CD4-positive, alpha-beta T cell (primary cell): ENCODE measurements at regions of chr2 and their contacts with region 1.

Region 1: GRCh38 chr2:234425619-234426603 is 71.0 kb downstream of the ARL4C start:
- DNase-seq: peak; percentile 70 to 95 (median 82)
- ATAC-seq: peak; percentile 70
- H3K4me3 ChIP-seq: peak overlapping the region; percentile 5
- H3K4me3 Mint-ChIP-seq: peak overlapping the region; percentile 88
- H3K27ac ChIP-seq: peak overlapping the region; percentile 78 to 87
- H3K27ac Mint-ChIP-seq: peak overlapping the region; percentile 97
- H3K4me1 ChIP-seq: peaks cover 90% of the 10 kb centered on the region
- H3K4me1 Mint-ChIP-seq: peaks cover 97% of the 10 kb centered on the region
- H3K27me3 ChIP-seq: no peaks in the 10 kb centered on the region
- H3K27me3 Mint-ChIP-seq: no peaks in the 10 kb centered on the region
- CTCF ChIP-seq: no peak

Region 2: DNA sequence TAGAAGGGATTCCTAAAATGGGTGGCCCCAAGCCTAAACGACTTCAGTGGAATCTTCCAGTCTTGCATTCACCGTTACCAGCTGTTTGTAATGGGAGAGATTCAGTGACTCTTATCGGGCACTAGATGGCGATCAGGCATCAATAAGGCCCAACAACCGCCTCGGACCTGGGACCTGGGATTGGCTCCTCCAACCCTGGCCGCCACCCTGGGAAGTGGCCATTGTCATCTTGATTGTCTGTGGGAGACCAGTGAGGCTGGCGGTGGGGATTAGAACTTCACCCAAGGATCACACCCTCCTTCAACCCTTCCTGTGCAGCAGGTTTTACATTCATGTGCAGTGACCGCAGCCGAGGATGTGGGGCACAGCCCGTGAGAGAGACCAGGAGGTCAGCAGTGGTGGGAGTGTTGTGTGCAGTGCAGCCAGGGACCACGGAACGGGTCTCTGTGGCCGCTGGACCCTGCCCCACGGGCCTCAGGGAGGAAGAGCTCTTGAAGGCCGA is 290.1 kb before region 1 on chr2:
- CTCF ChIA-PET with region 1: interaction called, 6 read pairs
- POLR2A ChIA-PET with region 1: no interaction called
- intact Hi-C with region 1: loop called in 1 of 2 experiments (anchors 2 kb)
- DNase-seq: peak; percentile 23 to 77 (median 32)
- ATAC-seq: peak; percentile 66
- H3K4me3 ChIP-seq: no peak overlapping the region
- H3K4me3 Mint-ChIP-seq: no peak overlapping the region
- H3K27ac ChIP-seq: no peak overlapping the region
- H3K27ac Mint-ChIP-seq: peak overlapping the region; percentile 63
- H3K4me1 ChIP-seq: peaks cover 32% of the 10 kb centered on the region
- H3K4me1 Mint-ChIP-seq: peaks cover 37% of the 10 kb centered on the region
- H3K27me3 ChIP-seq: no peaks in the 10 kb centered on the region
- H3K27me3 Mint-ChIP-seq: no peaks in the 10 kb centered on the region
- CTCF ChIP-seq: peak; percentile 84

Region 3: DNA sequence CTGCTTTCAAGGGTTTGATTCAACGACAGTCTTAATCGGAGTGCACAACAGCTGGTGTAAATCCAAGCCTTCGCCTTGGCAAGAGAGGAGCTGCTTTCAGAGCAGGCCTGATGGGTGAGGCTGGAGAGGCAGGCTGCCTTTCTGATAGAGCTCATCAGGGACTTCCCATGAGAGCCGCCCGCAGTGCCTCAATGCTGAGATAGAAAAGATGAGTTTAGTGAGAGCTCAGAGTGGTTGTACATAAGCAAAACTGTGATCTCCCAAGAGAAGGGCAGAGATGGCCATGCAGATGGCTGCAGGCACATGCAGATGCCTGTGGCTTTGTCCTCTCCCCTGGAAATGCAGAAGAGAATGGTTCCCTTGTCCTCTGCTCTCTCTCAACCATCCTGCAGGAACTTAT is 51.2 kb before region 1 on chr2:
- CTCF ChIA-PET with region 1: no interaction called
- POLR2A ChIA-PET with region 1: interaction called, 12 read pairs
- intact Hi-C with region 1: loop called in 1 of 2 experiments (anchors 2 kb)
- DNase-seq: no peak
- ATAC-seq: no peak
- H3K4me3 ChIP-seq: no peak overlapping the region
- H3K4me3 Mint-ChIP-seq: no peak overlapping the region
- H3K27ac ChIP-seq: no peak overlapping the region
- H3K27ac Mint-ChIP-seq: peak overlapping the region; percentile 88
- H3K4me1 ChIP-seq: peaks cover 39% of the 10 kb centered on the region
- H3K4me1 Mint-ChIP-seq: peaks cover 59% of the 10 kb centered on the region
- H3K27me3 ChIP-seq: no peaks in the 10 kb centered on the region
- H3K27me3 Mint-ChIP-seq: no peaks in the 10 kb centered on the region
- CTCF ChIP-seq: no peak

Region 4: DNA sequence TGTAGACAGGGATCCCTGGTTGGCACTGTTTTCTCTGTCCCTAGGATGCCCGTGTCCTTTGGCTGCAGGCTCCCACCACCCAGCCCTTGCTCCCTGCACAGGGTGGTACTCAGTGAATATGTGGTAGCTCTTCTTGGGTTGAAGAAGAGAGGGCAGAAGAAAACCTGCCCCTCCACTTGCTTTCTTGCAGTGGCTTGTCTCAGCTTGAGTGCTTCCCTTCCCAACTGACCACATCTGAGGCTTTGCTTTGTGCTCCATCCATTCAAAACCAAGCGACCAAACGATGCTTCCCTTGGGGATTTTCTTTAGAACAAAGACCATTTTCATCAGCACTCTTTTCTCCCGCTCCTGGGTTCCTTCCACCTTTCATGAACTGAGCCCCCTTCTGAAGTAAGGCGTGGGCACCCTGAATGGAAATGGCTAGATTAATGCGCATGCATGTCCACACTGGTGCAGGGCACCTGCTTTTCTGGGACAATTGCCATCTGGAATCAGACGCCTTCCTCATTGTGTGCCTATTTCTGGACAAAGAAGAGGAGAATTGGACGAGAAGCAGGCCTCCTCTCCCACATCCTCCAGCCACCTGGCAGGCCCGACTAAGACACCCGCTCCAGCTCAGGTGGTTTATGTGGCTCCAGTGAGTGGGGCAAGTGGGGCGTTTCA is 11.9 kb after region 1 on chr2:
- CTCF ChIA-PET with region 1: interaction called, 3 read pairs
- POLR2A ChIA-PET with region 1: interaction called, 58 read pairs
- intact Hi-C with region 1: no loop called
- DNase-seq: no peak
- ATAC-seq: peak; percentile 30
- H3K4me3 ChIP-seq: peak overlapping the region; percentile 6
- H3K4me3 Mint-ChIP-seq: peak overlapping the region; percentile 45
- H3K27ac ChIP-seq: peak overlapping the region; percentile 70 to 73
- H3K27ac Mint-ChIP-seq: peak overlapping the region; percentile 87
- H3K4me1 ChIP-seq: peaks cover 69% of the 10 kb centered on the region
- H3K4me1 Mint-ChIP-seq: peaks cover 89% of the 10 kb centered on the region
- H3K27me3 ChIP-seq: no peaks in the 10 kb centered on the region
- H3K27me3 Mint-ChIP-seq: no peaks in the 10 kb centered on the region
- CTCF ChIP-seq: no peak

Region 5: DNA sequence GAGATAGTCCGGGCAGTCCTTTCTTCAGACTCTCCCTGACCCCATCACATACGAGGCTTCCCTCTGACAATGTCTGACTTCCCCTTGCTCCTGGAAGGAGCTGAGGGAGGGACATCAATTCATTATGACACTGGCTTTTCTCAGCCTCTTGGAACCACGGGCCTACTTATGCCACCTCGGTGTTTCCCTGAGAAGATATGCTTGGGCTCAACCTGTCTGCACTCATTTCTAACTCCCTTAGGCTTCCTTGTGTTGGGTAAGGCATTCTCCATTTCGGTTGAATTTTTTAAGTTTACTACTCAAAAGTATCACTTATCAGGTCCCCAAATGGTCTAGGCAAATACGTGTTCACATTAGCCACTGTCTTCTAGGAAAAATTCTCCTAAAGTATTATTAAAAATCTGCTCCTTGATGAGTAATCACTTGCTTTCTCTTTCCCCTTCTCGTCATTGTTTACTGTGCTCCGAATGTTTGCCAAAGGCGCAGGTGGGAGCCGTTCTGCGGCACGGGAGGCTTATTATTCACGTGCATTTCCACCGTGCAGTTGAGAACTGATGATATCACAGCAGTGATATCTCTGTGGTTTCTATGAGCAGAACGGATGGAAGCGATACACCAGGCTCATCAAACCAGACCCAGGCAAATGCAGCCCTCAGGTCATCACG is 37.8 kb after region 1 on chr2:
- CTCF ChIA-PET with region 1: interaction called, 10 read pairs
- POLR2A ChIA-PET with region 1: interaction called, 60 read pairs
- intact Hi-C with region 1: loop called (anchors 1 to 5 kb)
- DNase-seq: peak; percentile 64 to 93 (median 77)
- ATAC-seq: peak; percentile 89
- H3K4me3 ChIP-seq: peak overlapping the region; percentile 25
- H3K4me3 Mint-ChIP-seq: peak overlapping the region; percentile 84
- H3K27ac ChIP-seq: peak overlapping the region; percentile 81 to 93
- H3K27ac Mint-ChIP-seq: peak overlapping the region; percentile 89
- H3K4me1 ChIP-seq: peaks cover 72% of the 10 kb centered on the region
- H3K4me1 Mint-ChIP-seq: peaks cover 82% of the 10 kb centered on the region
- H3K27me3 ChIP-seq: no peaks in the 10 kb centered on the region
- H3K27me3 Mint-ChIP-seq: no peaks in the 10 kb centered on the region
- CTCF ChIP-seq: no peak

Region 6: DNA sequence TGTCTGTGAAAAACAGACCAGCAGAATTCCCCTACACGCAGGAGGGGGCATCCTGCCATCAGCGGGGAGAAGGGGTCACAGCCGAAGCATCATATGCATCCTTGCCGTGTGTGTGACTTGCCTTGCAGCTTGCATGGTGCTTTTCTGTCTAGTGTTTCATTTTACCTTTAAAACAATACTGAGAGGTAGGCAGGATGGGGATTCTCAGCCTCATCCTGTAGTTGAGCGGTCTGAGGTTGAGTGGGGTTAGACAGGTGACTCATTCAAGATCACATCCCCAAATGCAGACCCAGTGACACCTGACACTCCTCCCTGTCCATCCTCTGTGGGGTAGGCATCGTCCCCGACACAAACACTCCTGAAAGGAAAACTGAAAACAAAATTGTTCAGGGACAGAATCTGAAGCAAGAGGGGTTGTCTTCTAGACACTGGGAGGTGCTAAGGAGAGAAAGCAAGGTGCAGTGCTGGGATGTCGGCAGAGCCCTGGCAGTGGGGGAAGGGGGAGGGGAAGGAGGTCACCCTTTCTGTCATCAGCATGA is 63.1 kb after region 1 on chr2:
- CTCF ChIA-PET with region 1: interaction called, 6 read pairs
- POLR2A ChIA-PET with region 1: interaction called, 31 read pairs
- intact Hi-C with region 1: loop called (anchors 1 to 2 kb)
- DNase-seq: peak; percentile 55 to 94 (median 69)
- ATAC-seq: peak; percentile 69
- H3K4me3 ChIP-seq: peak overlapping the region; percentile 94
- H3K4me3 Mint-ChIP-seq: peak overlapping the region; percentile 82
- H3K27ac ChIP-seq: peak overlapping the region; percentile 70 to 96
- H3K27ac Mint-ChIP-seq: peak overlapping the region; percentile 98
- H3K4me1 ChIP-seq: peaks cover 75% of the 10 kb centered on the region
- H3K4me1 Mint-ChIP-seq: peaks cover 92% of the 10 kb centered on the region
- H3K27me3 ChIP-seq: no peaks in the 10 kb centered on the region
- H3K27me3 Mint-ChIP-seq: no peaks in the 10 kb centered on the region
- CTCF ChIP-seq: no peak